ENCODE measurements at regions of chr7 and their contacts with region 1.

Region 1: GRCh38 chr7:109844362-109844761 is 1246.6 kb upstream of the LRRN3 start:
- DNase-seq: no peak
- H3K4me3 Mint-ChIP-seq: no peak overlapping the region
- H3K27ac Mint-ChIP-seq: no peak overlapping the region
- H3K4me1 Mint-ChIP-seq: no peaks in the 10 kb centered on the region
- H3K27me3 Mint-ChIP-seq: no peaks in the 10 kb centered on the region

Region 2: DNA sequence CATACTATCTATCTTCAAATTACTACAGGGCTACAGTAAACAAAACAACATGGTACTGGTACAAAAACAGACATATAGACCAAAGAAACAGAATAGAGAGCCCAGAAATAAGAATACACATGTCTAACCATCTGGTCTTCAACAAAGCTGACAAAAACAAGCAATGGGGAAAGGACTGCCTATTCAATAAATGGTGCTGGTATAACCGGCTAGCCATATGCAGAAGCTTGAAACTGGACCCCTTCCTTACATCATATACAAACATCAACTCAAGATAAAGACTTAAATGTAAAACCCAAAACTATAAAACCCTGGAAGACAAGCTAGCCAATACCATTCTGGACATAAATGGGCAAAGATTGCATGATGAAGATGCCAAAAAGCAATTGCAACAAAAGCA is 131.0 kb before region 1 on chr7:
- intact Hi-C with region 1: no loop called
- DNase-seq: no peak
- H3K4me3 Mint-ChIP-seq: no peak overlapping the region
- H3K27ac Mint-ChIP-seq: no peak overlapping the region
- H3K4me1 Mint-ChIP-seq: no peaks in the 10 kb centered on the region
- H3K27me3 Mint-ChIP-seq: no peaks in the 10 kb centered on the region

Region 3: GRCh38 chr7:111486472-111487142 is 1642.2 kb after region 1 on chr7:
- intact Hi-C with region 1: loop called (anchors 5 kb)
- DNase-seq: peak; percentile 66
- H3K4me3 Mint-ChIP-seq: no peak overlapping the region
- H3K27ac Mint-ChIP-seq: no peak overlapping the region
- H3K4me1 Mint-ChIP-seq: peaks cover 2% of the 10 kb centered on the region
- H3K27me3 Mint-ChIP-seq: no peaks in the 10 kb centered on the region

Region 4: DNA sequence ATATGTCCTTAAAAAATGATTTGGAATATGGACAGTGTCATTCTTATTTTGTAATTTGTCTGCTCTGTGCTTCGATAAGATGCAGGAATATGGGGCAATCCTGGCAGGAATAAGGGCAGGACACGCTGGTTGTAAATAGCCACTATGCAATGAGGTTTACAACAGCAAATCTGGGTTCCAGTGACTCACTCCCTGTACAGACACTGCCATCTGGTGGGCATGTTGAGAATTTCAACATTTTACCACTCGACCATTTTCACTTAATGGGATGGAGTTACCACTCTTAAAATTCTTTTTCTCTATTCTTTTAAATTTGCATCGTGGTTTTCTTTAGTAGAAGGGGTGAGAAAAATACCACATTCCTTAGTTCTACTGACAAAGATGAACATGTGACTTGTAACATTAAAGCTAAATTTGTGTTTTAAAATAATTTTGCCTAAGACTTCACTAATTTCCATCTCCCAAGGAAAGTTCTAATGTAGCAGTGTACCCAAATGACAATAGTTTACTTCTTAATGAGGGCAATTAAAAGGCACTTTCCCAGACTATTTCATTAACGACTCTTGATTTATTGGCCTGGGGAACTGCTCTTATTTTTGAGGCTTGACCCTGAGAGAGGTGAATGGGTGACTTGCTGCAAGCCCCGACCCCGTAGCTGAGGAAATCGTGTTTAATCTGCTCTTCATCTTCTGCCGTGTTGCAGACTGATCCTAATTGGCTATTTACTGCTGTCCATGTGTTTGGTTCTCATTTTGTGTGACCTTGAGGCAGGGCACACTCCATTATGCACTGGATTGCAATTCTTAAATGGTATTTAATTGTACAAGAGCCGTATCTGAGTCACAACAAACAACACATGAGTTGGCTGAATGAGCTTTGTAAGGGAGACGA is 1891.5 kb after region 1 on chr7:
- intact Hi-C with region 1: loop called (anchors 1 kb)
- DNase-seq: peak; percentile 89
- H3K4me3 Mint-ChIP-seq: no peak overlapping the region
- H3K27ac Mint-ChIP-seq: no peak overlapping the region
- H3K4me1 Mint-ChIP-seq: no peaks in the 10 kb centered on the region
- H3K27me3 Mint-ChIP-seq: no peaks in the 10 kb centered on the region

Measured in activated CD4-positive, alpha-beta T cell treated with anti-CD3 and anti-CD28 coated beads, Interleukin-2, amount 10 ng/mL, durations not matched to agents 24 days and 14 days (primary cell).